Ovary (tissue), 10 donors: ENCODE measurements at regions of chr14 and their contacts with region 1.

Region 1: DNA sequence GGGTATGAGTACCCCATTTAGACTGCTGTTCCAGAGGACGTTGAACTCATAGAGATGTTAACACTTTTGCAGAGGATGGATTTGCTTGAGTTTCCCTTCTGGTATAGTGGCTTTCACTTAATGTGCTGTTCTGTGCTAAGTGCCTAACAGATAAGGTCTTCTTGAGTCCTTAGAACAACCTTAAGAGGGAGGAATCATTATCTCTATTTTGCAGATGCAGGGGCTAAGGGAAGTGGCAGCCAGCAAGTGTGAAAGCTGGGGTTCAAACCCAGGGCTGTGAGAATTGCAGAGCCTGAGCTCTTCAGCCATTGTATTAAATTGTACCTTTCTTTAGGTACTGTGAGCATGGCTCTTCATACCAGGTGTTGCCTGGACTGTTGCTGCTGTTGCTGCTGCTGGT is 122.1 kb upstream of the NRXN3 start:
- DNase-seq: no peak
- H3K4me3 ChIP-seq: no peak overlapping the region
- H3K27ac ChIP-seq: no peak overlapping the region
- H3K4me1 ChIP-seq: no peaks in the 10 kb centered on the region
- H3K27me3 ChIP-seq: no peaks in the 10 kb centered on the region
- CTCF ChIP-seq: no peak
- EP300 ChIP-seq: no peak
- POLR2A ChIP-seq: no peak

Region 2: DNA sequence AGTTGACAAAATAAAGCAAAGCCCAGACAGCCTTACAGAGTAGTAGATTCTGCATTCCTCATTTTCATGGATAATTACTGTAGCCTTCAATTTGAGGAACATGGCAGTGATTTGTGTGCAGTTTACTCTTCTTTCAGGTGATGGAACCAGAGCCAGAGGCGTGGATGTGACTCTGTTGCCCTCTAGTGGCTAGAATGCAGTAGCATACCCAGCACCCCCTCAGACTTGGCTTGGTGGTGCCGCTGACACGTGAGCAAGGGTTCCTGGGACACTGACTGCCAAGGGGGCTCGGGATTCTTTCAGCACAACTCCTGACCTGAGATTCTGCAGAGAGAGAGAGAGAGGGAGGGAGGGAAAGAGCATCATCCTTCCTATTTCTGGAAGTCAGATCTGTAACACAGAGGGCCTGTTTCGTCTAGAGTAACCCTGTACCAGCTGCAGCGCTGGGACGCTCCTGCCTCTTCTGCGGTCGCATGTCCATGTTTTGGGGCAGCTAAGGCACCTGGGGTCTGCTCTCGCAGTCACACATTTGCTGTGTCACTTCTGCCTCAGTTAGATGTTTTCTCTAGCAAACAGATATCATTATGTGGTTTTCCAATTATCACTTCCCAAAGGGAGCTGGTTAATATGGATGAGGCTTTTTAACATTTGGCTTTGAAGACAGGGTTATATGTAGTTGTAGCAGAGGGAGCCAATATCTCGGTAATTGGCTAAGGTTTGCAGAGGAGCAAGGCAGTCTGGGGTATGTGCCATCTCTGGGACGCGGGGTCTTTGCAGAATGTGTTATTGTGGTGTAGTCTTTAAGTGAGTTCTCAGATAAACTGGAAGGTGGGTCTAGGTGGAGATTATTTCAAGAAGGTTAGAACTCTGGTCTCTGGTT is 550.2 kb after region 1 on chr14:
- intact Hi-C with region 1: loop called in 1 of 4 experiments (anchors 10 kb)
- DNase-seq: peak in 4 of 5 donors; percentile 11 to 30 (median 16)
- H3K4me3 ChIP-seq: no peak overlapping the region
- H3K27ac ChIP-seq: no peak overlapping the region
- H3K4me1 ChIP-seq: no peaks in the 10 kb centered on the region
- H3K27me3 ChIP-seq: no peaks in the 10 kb centered on the region
- CTCF ChIP-seq: no peak
- EP300 ChIP-seq: no peak
- POLR2A ChIP-seq: no peak